ENCODE measurements at regions of chr5 and their contacts with region 1.

Region 1: GRCh38 chr5:55711968-55712859 is at the start of gene SLC38A9:
- DNase-seq: peak; percentile 72 to 97
- H3K4me3 ChIP-seq: peak within 1 kb of the TSS; percentile 59 to 94
- H3K27ac ChIP-seq: peak within 1 kb of the TSS; percentile 35 to 37
- H3K4me1 ChIP-seq: peaks cover 4 to 7% of the 10 kb centered on the region in 2 donors
- H3K27me3 ChIP-seq: no peaks in the 10 kb centered on the region
- CTCF ChIP-seq: no peak
- total RNA-seq, gene SLC38A9: 1.8 TPM

Region 2: DNA sequence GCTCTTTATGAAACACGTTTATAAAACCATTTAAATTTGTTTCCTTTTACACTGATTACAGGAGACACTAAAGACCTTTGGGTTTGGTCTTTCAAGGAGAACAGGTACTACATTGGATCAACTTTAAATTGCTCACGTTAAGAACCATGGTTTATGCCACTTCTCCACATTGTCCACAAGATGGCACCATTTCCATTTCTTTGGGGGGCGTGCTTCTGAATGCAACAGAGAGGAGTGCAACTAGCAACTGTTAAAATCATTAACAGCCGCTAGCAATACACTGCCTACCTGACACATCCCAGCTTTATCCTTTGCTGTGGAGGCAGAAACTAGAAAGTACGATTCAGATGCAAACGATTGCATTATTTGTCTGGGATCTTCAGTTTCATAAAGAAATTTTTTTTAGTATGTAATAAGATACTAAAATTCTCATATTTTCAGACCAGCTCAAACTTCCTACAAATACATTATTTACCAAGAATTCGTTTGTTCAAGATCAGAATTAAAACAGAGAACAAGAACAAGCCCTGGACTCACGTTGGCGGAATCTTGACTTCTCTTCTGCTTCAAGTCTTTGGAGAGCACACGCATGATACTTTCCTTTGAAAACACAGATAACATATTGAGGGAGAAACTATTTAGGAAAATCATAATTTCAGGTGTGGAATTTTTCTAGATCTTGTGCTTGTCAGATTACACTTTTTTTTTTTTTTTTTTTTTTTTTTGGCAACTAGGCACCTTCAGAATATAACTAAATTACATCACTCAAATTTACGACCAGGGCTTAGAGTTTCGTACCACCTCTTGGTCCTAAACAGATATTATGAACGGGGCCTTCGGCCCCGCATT is 539.9 kb before region 1 on chr5:
- intact Hi-C with region 1: loop called (anchors 5 kb)
- DNase-seq: peak in 1 of 2 donors; percentile 78
- H3K4me3 ChIP-seq: peak overlapping the region; percentile 57 to 64
- H3K27ac ChIP-seq: no peak overlapping the region
- H3K4me1 ChIP-seq: peaks cover 0 to 8% of the 10 kb centered on the region in 2 donors
- H3K27me3 ChIP-seq: peaks cover 6% of the 10 kb centered on the region
- CTCF ChIP-seq: peak; percentile 47 to 80 (median 65)

Region 3: GRCh38 chr5:55226027-55226933 is 485.9 kb before region 1 on chr5:
- intact Hi-C with region 1: loop called (anchors 5 kb)
- DNase-seq: no peak
- H3K4me3 ChIP-seq: peak overlapping the region; percentile 49 to 70
- H3K27ac ChIP-seq: no peak overlapping the region
- H3K4me1 ChIP-seq: peaks cover 11 to 13% of the 10 kb centered on the region in 2 donors
- H3K27me3 ChIP-seq: peaks cover 41% of the 10 kb centered on the region
- CTCF ChIP-seq: no peak

Region 4: DNA sequence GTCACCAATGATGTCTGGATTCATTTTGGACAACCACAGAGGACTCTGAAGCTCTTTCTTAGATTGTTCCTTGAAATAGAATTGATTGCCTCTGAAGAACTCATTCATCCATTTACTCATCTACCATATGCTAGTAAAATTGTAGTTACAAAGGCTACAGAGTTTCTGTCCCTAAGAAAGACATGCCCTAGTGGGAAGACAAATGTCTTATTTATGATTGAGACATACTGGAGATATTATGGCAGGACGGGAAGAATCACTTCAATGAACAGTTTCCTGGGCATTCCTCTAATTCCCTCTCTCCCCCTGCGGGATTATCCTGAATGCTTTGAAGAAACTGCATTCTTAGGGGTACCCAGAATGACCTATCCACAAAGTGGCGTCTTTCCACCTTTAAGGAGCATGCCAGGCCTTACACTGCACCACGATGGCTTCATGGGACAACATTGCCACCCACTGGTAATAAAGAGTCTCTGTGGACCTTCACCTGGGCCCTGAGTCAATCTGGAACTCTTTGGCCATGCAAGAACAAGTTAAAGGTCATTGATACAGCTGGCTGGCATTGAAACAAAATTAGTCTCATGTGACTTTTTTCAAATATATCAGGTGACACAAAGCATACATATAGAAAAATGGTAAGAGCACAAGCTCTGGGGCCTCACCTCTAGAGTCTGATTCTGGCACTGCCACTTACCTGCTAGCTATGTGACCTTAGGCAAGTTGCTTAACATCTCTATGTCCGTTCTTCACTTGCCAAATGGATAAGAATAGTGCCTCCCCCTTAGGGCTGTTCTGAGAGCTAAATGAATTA is 488.8 kb after region 1 on chr5:
- intact Hi-C with region 1: loop called (anchors 10 kb)
- DNase-seq: peak in 1 of 2 donors; percentile 72
- H3K4me3 ChIP-seq: no peak overlapping the region
- H3K27ac ChIP-seq: no peak overlapping the region
- H3K4me1 ChIP-seq: no peaks in the 10 kb centered on the region
- H3K27me3 ChIP-seq: no peaks in the 10 kb centered on the region
- CTCF ChIP-seq: peak; percentile 56 to 65 (median 63)